Panc1 (cell line): ENCODE measurements at regions of chr22 and their contacts with region 1.

Region 1: DNA sequence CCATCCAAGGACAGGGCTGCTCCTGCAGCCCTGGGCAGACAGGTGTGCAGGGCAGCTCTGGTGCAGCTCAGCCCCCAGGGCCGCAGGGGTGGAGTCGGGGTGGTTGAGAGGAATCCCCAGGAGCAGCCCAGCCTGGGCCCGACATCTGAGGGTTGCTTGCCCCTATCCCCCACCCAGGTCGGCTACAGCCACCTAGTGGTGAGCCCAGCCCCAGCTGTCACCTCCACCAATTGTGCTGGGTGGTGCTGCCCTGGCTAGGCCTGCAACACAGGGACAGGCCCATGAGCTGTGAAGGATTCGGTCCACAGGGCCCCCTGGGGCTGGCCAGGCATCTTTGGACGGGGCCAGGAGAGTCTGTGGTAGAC is 29.6 kb downstream of the RTN4R start:
- DNase-seq: no peak
- ATAC-seq: peak; percentile 91
- H3K4me3 ChIP-seq: no peak overlapping the region
- H3K27ac ChIP-seq: no peak overlapping the region
- H3K4me1 ChIP-seq: no peaks in the 10 kb centered on the region
- H3K27me3 ChIP-seq: no peaks in the 10 kb centered on the region
- CTCF ChIP-seq: peak; percentile 76; the same call in 1 of the 2 replicates

Region 2: DNA sequence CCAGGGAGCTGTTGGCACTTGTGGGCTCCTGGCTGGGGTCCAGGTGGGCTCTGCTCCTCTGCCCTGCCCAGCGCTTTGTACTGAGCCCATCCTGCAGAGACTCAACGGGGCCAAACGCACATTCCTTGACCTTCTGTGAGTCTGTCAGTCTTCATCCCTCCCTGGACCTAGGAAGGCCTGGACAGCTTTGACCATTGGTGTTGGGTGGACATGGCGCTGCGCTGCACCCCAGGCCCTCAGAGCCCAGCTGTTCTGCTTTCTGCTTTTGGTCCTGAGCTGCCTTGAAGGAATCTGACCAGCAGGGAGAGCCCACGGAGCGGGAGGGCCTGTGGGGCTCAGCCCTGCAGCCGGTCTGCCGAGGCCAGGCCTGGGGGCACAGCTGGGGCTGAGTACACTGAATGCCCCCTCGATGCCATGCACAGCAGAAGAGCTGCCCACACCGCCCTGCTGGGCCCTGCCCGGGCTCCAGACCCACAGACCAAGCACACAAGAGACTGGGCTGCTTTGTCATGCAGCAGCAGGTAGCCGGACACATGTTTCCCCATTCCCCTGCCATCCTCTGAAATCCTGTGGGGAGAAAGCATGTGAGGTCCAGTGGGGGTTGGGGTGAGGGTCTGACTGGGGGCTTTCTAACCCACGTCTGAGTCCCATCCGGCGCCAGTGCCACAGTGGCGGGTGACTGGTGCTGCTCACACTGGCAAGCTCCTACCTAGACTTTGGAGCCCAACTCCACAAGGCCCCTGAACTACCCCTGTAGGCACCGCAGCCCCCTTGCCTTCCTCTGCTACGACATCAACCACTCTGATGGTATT is 63.5 kb before region 1 on chr22:
- CTCF ChIA-PET with region 1: interaction called, 14 read pairs
- POLR2A ChIA-PET with region 1: no interaction called
- in situ Hi-C with region 1: no loop called
- intact Hi-C with region 1: loop called (anchors 10 kb)
- DNase-seq: no peak
- ATAC-seq: peak; percentile 82
- H3K4me3 ChIP-seq: no peak overlapping the region
- H3K27ac ChIP-seq: no peak overlapping the region
- H3K4me1 ChIP-seq: peaks cover 3% of the 10 kb centered on the region; the same call in 1 of the 2 replicates
- H3K27me3 ChIP-seq: no peaks in the 10 kb centered on the region
- CTCF ChIP-seq: peak; percentile 74